ENCODE measurements at regions of chr2 and their contacts with region 1.

Region 1: GRCh38 chr2:69724540-69725159 is 17.3 kb upstream of the ANXA4 start:
- DNase-seq: peak; percentile 61 to 90 (median 84)
- ATAC-seq: peak; percentile 88
- H3K4me3 ChIP-seq: no peak overlapping the region
- H3K4me3 Mint-ChIP-seq: peak overlapping the region; percentile 52
- H3K27ac ChIP-seq: no peak overlapping the region
- H3K27ac Mint-ChIP-seq: no peak overlapping the region
- H3K4me1 ChIP-seq: peaks cover 4% of the 10 kb centered on the region
- H3K4me1 Mint-ChIP-seq: peaks cover 6% of the 10 kb centered on the region
- H3K27me3 ChIP-seq: no peaks in the 10 kb centered on the region
- H3K27me3 Mint-ChIP-seq: no peaks in the 10 kb centered on the region
- CTCF ChIP-seq: peak; percentile 97

Region 2: GRCh38 chr2:69559442-69560146 is 165.1 kb before region 1 on chr2:
- CTCF ChIA-PET with region 1: interaction called, 38 read pairs
- POLR2A ChIA-PET with region 1: no interaction called
- intact Hi-C with region 1: no loop called
- DNase-seq: peak in 2 of 9 experiments; percentile 51 to 63
- ATAC-seq: peak; percentile 70
- H3K4me3 ChIP-seq: no peak overlapping the region
- H3K4me3 Mint-ChIP-seq: no peak overlapping the region
- H3K27ac ChIP-seq: no peak overlapping the region
- H3K27ac Mint-ChIP-seq: peak overlapping the region; percentile 83
- H3K4me1 ChIP-seq: peaks cover 81% of the 10 kb centered on the region
- H3K4me1 Mint-ChIP-seq: peaks cover 86% of the 10 kb centered on the region
- H3K27me3 ChIP-seq: no peaks in the 10 kb centered on the region
- H3K27me3 Mint-ChIP-seq: no peaks in the 10 kb centered on the region
- CTCF ChIP-seq: peak; percentile 68

Region 3: DNA sequence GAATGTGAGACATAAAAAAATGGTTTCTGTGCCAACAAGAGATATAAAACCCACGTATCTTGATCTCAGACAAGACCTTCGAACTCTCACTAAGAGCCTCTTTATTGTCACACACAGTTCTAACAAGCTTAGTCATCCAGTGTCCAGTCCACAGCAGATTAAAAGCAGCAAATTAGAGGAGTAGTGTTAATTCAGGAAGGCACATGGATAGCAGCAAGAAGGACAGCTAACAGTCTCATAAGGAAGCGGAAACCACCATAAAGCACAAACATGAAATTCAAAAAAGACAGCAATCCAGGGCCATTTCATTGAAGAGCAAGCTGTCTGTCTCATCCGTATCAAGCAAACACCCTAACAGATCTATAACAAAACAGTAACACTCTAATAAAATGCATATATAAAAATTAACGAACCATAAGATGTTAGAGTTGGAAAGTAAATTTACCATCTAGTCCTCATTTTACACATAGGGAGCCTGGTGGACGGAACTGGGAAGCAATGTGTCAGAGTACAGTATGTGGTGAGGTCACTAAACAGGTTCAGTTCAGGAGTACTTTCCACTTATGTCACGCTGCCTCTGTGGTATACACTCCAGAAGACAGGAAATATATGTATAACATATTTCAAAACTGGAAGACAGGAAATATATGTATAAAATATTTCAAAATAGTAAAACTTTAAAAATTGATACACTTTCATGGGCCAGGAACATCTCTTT is 99.4 kb before region 1 on chr2:
- CTCF ChIA-PET with region 1: interaction called, 12 read pairs
- POLR2A ChIA-PET with region 1: no interaction called
- intact Hi-C with region 1: no loop called
- DNase-seq: peak in 1 of 9 experiments; percentile 40
- ATAC-seq: peak; percentile 19
- H3K4me3 ChIP-seq: no peak overlapping the region
- H3K4me3 Mint-ChIP-seq: no peak overlapping the region
- H3K27ac ChIP-seq: peak overlapping the region in 1 of 2 experiments; percentile 7
- H3K27ac Mint-ChIP-seq: no peak overlapping the region
- H3K4me1 ChIP-seq: peaks cover 81% of the 10 kb centered on the region
- H3K4me1 Mint-ChIP-seq: peaks cover 17% of the 10 kb centered on the region
- H3K27me3 ChIP-seq: no peaks in the 10 kb centered on the region
- H3K27me3 Mint-ChIP-seq: no peaks in the 10 kb centered on the region
- CTCF ChIP-seq: no peak

Region 4: GRCh38 chr2:69704446-69704845 is 20.2 kb before region 1 on chr2:
- CTCF ChIA-PET with region 1: interaction called, 18 read pairs
- POLR2A ChIA-PET with region 1: no interaction called
- intact Hi-C with region 1: no loop called
- DNase-seq: no peak
- ATAC-seq: no peak
- H3K4me3 ChIP-seq: no peak overlapping the region
- H3K4me3 Mint-ChIP-seq: no peak overlapping the region
- H3K27ac ChIP-seq: no peak overlapping the region
- H3K27ac Mint-ChIP-seq: no peak overlapping the region
- H3K4me1 ChIP-seq: peaks cover under 1% of the 10 kb centered on the region
- H3K4me1 Mint-ChIP-seq: peaks cover 18% of the 10 kb centered on the region
- H3K27me3 ChIP-seq: no peaks in the 10 kb centered on the region
- H3K27me3 Mint-ChIP-seq: no peaks in the 10 kb centered on the region
- CTCF ChIP-seq: no peak

Region 5: GRCh38 chr2:69798909-69799526 is 74.4 kb after region 1 on chr2:
- CTCF ChIA-PET with region 1: interaction called, 37 read pairs
- POLR2A ChIA-PET with region 1: interaction called, 4 read pairs
- intact Hi-C with region 1: no loop called
- DNase-seq: no peak
- ATAC-seq: no peak
- H3K4me3 ChIP-seq: no peak overlapping the region
- H3K4me3 Mint-ChIP-seq: peak overlapping the region; percentile 44
- H3K27ac ChIP-seq: no peak overlapping the region
- H3K27ac Mint-ChIP-seq: no peak overlapping the region
- H3K4me1 ChIP-seq: peaks cover 5% of the 10 kb centered on the region
- H3K4me1 Mint-ChIP-seq: peaks cover 17% of the 10 kb centered on the region
- H3K27me3 ChIP-seq: no peaks in the 10 kb centered on the region
- H3K27me3 Mint-ChIP-seq: no peaks in the 10 kb centered on the region
- CTCF ChIP-seq: no peak

Region 6: GRCh38 chr2:69914170-69914960 is 189.7 kb after region 1 on chr2:
- CTCF ChIA-PET with region 1: no interaction called
- POLR2A ChIA-PET with region 1: interaction called, 3 read pairs
- intact Hi-C with region 1: loop called in 1 of 2 experiments (anchors 10 kb)
- DNase-seq: peak in 7 of 9 experiments; percentile 99 to 100 (median 100)
- ATAC-seq: peak; percentile 93
- H3K4me3 ChIP-seq: peak overlapping the region; percentile 87 to 89
- H3K4me3 Mint-ChIP-seq: peak overlapping the region; percentile 85
- H3K27ac ChIP-seq: peak overlapping the region; percentile 91 to 97
- H3K27ac Mint-ChIP-seq: peak overlapping the region; percentile 92
- H3K4me1 ChIP-seq: peaks cover 21% of the 10 kb centered on the region
- H3K4me1 Mint-ChIP-seq: peaks cover 30% of the 10 kb centered on the region
- H3K27me3 ChIP-seq: no peaks in the 10 kb centered on the region
- H3K27me3 Mint-ChIP-seq: no peaks in the 10 kb centered on the region
- CTCF ChIP-seq: no peak